Activated CD4-positive, alpha-beta memory T cell treated with anti-CD3 and anti-CD28 coated beads, Interleukin-2, amount 10 ng/mL, durations not matched to agents 7 days and 5 days (primary cell): ENCODE measurements at regions of chr19 and their contacts with region 1.

Region 1: DNA sequence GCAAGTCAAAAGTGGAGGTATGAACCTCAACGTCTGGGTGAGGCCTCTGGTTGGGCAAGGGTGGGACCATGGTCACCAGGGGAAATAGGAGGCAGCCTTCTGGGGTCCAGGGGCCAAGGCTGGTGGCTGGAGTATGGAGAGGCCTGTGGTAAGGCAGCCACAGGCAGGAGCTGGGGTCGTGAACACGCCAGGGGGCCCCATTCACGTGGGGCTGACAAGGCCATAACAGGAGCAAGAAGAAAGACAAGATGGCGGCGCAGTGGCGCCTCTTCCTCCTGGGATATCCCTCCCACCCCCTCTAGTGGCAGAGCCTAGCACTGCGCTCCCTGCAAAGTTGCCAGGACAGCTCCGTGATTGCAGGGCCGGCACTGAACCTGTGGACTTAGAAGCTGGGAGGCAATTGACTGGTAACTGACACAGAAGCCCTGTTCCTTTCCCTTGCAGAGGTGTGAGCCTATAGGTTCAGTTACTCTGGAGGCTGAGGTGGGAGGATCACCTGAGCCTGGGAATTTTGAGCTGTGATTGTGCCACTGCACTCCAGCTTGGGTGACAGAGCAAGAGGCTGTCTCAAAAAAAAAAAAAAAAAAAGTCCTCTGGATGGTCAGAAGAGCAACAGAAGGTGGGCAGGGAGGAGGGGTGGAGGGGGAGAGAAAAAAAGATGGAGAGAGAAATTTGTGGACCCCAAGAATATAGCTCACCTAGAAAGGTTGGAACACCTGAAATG is 19.7 kb upstream of the EDDM13 start:
- DNase-seq: peak; percentile 77
- H3K4me3 Mint-ChIP-seq: no peak overlapping the region
- H3K27ac Mint-ChIP-seq: no peak overlapping the region
- H3K4me1 Mint-ChIP-seq: peaks cover 1% of the 10 kb centered on the region
- H3K27me3 Mint-ChIP-seq: no peaks in the 10 kb centered on the region

Region 2: GRCh38 chr19:56066152-56067023 is 186.5 kb before region 1 on chr19:
- CTCF ChIA-PET with region 1: interaction called, 22 read pairs
- POLR2A ChIA-PET with region 1: no interaction called
- DNase-seq: peak; percentile 61
- H3K4me3 Mint-ChIP-seq: peak overlapping the region; percentile 6
- H3K27ac Mint-ChIP-seq: no peak overlapping the region
- H3K4me1 Mint-ChIP-seq: peaks cover 14% of the 10 kb centered on the region
- H3K27me3 Mint-ChIP-seq: peaks cover 9% of the 10 kb centered on the region

Region 3: DNA sequence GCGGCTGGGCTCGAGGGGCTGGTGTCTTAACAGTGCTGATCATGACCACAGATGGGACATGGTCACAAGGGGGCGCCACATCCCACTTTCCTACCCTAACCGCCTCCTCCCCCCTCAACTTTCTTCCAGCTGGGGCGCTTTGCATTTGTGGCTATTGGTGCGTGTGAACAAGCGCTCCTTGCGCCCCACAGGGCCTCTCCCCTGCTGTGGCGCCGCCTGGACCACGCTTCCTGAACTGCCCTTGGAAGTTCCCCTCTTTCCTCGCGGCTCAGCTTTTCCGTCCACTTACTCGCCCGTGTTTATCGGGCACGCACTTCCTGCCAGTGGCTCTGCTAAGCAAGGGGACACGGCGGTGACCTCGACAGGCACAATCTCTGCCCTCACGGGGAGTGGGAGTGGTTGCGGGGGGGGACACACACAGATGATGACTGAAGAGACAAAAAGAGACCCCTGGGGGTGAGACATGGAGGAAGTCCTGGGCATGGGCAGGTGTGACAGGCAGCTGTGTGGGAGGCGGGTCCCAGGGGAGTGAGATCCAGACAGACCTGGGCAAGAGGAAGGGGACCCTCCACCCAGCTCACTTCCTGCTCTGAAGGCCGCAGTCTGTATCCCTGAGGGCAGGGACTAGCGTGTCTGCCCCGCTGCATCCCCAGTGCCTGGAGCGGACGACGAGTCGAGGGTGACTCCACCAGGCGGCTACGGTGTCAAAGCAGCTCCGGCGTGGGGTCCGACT is 172.0 kb before region 1 on chr19:
- CTCF ChIA-PET with region 1: interaction called, 34 read pairs
- POLR2A ChIA-PET with region 1: interaction called, 3 read pairs
- DNase-seq: peak; percentile 76
- H3K4me3 Mint-ChIP-seq: peak overlapping the region; percentile 68
- H3K27ac Mint-ChIP-seq: no peak overlapping the region
- H3K4me1 Mint-ChIP-seq: peaks cover 10% of the 10 kb centered on the region
- H3K27me3 Mint-ChIP-seq: peaks cover 4% of the 10 kb centered on the region

Region 4: DNA sequence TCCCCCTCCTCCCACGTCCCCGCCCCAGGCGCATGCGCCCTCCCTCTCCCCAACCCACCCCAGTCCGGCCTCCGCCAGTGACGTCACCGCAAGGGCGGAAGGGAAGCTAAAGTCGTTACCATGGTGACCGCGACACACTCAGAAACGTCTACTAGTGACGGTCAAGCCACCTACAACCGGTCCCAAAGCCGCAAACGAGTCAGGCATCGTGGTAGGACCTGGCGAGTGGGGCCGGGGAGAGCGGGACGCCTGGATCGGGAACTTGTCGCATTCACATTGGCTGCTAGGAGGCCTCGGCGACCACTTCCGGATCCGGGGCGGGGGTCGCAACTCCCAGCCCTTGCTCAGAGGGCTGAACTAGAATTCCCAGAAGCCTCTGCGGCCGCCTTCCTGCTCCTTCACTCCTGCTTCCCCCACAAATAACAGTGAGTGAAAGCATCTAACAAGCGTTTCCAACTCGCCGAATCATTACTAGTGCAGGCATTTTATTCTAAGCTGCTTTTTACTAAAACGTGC is 61.8 kb after region 1 on chr19 and contains the start of gene ZSCAN5A:
- CTCF ChIA-PET with region 1: interaction called, 19 read pairs
- POLR2A ChIA-PET with region 1: interaction called, 9 read pairs
- DNase-seq: peak; percentile 95
- H3K4me3 Mint-ChIP-seq: peak within 1 kb of the TSS; percentile 81
- H3K27ac Mint-ChIP-seq: peak within 1 kb of the TSS; percentile 97
- H3K4me1 Mint-ChIP-seq: peaks cover 23% of the 10 kb centered on the region
- H3K27me3 Mint-ChIP-seq: no peaks in the 10 kb centered on the region
- total RNA-seq, gene ZSCAN5A: 6.2 to 6.7 TPM

Region 5: DNA sequence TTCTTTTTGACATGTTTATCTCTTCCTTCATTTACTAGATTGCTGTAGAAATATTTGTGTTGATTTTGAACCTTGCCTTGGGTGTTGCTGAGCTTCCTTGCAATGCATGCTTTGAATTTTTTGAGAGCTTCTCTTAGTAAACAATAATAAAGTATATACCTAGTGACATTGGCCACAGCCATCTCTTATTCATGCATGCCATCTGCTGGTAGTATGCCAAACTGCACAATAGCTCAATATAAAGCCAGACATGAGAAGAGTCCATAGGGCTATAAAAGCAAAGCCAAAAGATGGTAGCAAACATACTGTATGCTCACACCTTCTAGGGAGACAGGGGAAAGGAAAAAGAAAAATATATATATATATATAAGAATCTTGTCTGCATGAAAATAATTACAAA is 80.6 kb after region 1 on chr19:
- CTCF ChIA-PET with region 1: interaction called, 155 read pairs
- POLR2A ChIA-PET with region 1: interaction called, 4 read pairs
- DNase-seq: peak; percentile 44
- H3K4me3 Mint-ChIP-seq: no peak overlapping the region
- H3K27ac Mint-ChIP-seq: no peak overlapping the region
- H3K4me1 Mint-ChIP-seq: no peaks in the 10 kb centered on the region
- H3K27me3 Mint-ChIP-seq: peaks cover 11% of the 10 kb centered on the region